Right lobe of liver (tissue), 6 donors: ENCODE measurements at regions of chr5 and their contacts with region 1.

Region 1: DNA sequence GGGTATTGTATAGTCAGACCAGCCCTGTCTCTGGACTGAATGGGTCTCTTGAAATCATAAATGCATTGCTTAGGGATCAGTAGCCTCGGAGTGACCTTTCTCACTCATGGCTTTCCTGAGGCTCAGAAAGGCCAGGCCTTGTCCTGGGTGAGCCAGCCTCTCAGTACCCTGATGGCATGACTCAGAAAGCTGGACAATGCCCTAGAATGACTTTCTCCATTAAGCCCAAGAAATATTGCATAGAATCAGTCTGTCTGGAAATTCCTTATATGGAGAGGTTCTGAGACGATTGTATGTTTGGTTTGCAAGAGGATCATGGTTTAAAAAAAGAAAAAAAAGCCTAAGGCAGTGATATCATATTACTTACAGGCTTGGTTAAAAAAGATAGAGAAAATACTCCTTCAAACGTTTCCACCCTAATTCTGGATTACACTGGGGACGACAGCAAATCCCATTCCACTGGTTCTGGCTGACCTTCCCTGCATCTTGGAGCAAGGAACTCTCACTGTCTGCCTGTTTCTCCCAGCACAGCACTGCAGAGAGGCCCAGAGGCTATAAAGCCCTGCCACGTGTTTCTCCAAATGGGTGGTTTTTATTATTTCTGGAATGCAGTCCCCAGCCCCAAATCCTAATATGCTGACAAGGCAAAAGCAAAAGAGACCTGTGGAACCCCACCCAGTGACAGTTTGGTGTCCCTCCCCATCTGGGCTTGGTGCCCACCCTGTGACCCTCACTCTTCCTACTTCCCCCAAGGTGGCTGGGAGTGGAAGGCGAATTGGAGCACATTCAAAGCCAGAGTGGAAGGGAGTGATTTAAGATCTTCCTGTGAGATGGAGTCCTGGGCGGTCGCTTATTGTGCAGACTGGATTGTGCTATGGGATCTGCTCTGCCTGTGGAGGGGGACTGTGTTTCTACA is 34.4 kb downstream of the MAP1B start:
- DNase-seq: no peak
- ATAC-seq: peak in 2 of 4 donors; percentile 29 to 38
- H3K4me3 ChIP-seq: no peak overlapping the region
- H3K27ac ChIP-seq: peak overlapping the region in 1 of 3 donors; percentile 5
- H3K4me1 ChIP-seq: no peaks in the 10 kb centered on the region
- H3K27me3 ChIP-seq: no peaks in the 10 kb centered on the region
- CTCF ChIP-seq: no peak
- POLR2A ChIP-seq: no peak

Region 2: DNA sequence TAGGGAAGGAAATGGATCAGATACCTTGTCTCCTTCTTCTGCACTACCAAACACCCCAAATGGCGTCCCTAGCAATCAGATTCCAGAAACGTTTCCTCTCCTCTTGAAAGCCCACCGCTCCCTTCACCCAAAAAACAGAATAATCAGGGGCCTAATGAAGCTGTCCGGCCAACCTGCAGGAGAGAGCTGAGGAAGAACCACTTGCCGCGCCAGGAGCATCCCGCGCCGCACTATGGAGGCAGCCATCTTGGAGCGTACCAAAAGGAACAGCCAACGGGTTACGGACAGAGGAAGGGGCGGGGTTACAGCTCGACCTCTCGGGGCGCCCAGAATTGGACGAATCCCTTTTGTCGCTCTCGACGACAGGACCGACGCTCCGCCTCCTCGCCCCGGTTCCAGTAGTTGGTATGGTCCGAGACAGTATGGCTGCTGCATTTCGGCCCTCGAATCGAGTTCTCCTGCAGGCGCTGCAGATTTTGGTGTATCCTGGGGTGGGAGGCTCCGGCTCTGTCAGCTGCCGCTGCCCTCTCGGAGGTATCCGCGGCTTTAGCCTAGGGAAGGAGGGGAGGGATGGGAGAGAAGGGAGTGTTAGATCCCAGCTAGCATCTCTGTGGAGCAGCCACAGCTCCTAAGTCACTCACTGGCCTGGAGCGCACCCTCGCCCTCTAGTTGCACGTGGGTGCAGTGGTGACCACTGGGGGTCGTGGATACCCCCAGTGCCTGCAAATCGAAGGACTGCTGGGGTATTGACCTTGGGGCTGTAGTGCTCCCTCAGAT is 178.5 kb after region 1 on chr5 and contains the starts of genes MRPS27 and PTCD2:
- intact Hi-C with region 1: loop called in 1 of 2 experiments (anchors 10 kb)
- DNase-seq: peak; percentile 95 to 97 (median 96)
- ATAC-seq: peak; percentile 100
- H3K4me3 ChIP-seq: peak within 1 kb of the TSS; percentile 67 to 97 (median 90)
- H3K27ac ChIP-seq: peak within 1 kb of the TSS; percentile 1 to 60 (median 42)
- H3K4me1 ChIP-seq: peaks cover 0 to 14% (median 0%) of the 10 kb centered on the region in 4 donors
- H3K27me3 ChIP-seq: no peaks in the 10 kb centered on the region
- CTCF ChIP-seq: peak in 1 of 4 donors; percentile 13
- POLR2A ChIP-seq: peak; percentile 69
- total RNA-seq, gene MRPS27: 28.6 to 40.3 (median 36.0) TPM
- total RNA-seq, gene PTCD2: 4.3 to 8.5 (median 6.7) TPM